ENCODE measurements at regions of chr4 and their contacts with region 1.

Region 1: GRCh38 chr4:25253071-25253445 is 19.2 kb downstream of the PI4K2B start:
- DNase-seq: no peak
- CTCF ChIP-seq: no peak

Region 2: DNA sequence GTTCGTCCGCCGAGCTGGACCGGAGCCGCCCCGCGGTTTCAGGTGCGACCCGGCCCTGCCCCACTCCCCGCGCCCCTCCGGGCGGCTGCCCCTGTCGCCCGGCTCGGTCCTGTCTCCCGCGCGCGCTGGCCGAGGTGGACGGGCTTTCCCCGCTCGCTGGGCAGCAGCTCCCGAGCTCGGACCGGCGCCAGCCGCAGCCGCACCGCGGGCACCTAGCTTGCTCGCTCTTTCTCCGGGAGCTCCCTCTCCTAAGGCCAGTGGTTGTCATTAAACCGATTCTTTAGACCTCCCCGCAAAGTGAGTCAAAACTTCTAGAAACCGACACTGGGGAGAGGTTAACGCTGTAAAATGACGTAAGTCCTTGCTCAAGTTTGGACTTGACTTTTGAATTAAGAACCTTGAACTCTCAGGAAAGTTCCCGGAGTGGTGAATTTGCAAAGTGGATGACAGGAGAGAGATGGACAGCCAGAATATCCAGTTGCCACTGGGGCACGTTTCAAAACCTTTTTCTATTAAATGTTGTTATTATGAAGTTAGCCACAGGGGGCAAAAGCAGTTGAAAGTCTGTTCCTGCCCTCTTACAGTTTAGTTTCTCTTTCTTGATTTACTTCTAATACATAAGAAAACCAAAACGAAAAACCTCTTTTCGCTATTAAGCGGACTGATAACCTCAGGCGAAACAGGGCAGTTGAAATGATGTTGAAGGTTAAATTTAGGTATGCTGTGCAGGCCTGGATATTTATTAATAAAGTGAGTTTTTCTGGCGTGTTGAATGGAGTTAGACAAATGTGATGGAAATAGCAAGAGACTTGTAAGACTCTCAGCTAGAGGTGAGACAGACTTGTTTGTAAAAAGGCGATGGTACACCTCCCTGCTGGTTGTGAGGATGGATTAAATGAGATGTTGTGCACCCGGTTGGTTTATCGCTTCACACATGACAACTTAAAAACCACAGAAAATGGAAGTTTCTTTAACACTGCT is 18.4 kb before region 1 on chr4:
- CTCF ChIA-PET with region 1: interaction called, 14 read pairs
- POLR2A ChIA-PET with region 1: no interaction called
- DNase-seq: peak; percentile 69
- CTCF ChIP-seq: peak; percentile 46

Region 3: GRCh38 chr4:25280210-25280609 is 27.2 kb after region 1 on chr4:
- CTCF ChIA-PET with region 1: no interaction called
- POLR2A ChIA-PET with region 1: no interaction called
- DNase-seq: no peak
- CTCF ChIP-seq: no peak

Region 4: GRCh38 chr4:25320773-25321172 is 67.7 kb after region 1 on chr4:
- CTCF ChIA-PET with region 1: no interaction called
- POLR2A ChIA-PET with region 1: no interaction called
- DNase-seq: peak; percentile 42
- CTCF ChIP-seq: no peak

Measured in GM10248 (cell line).